GM12878 (cell line): ENCODE measurements at regions of chr5 and their contacts with region 1.

Region 1: GRCh38 chr5:169851321-169851850 is 128.9 kb downstream of the INSYN2B start:
- DNase-seq: no peak
- ATAC-seq: no peak
- H3K4me3 ChIP-seq: no peak overlapping the region
- H3K27ac ChIP-seq: no peak overlapping the region
- H3K4me1 ChIP-seq: no peaks in the 10 kb centered on the region
- H3K27me3 ChIP-seq: no peaks in the 10 kb centered on the region
- CTCF ChIP-seq: no peak
- EP300 ChIP-seq: no peak
- POLR2A ChIP-seq: no peak
- RAD21 ChIP-seq: no peak

Region 2: GRCh38 chr5:169567079-169567478 is 284.3 kb before region 1 on chr5:
- CTCF ChIA-PET with region 1: no interaction called
- POLR2A ChIA-PET with region 1: no interaction called
- RAD21 ChIA-PET with region 1: no interaction called
- SMC1A ChIA-PET with region 1: no interaction called
- in situ Hi-C with region 1: no loop called
- intact Hi-C with region 1: no loop called
- DNase-seq: no peak
- ATAC-seq: peak; percentile 54; the same call in 2 of the 3 replicates
- H3K4me3 ChIP-seq: no peak overlapping the region
- H3K27ac ChIP-seq: no peak overlapping the region
- H3K4me1 ChIP-seq: no peaks in the 10 kb centered on the region
- H3K27me3 ChIP-seq: peaks cover 0 to 2% of the 10 kb centered on the region in 2 experiments; a peak in 3 of 4 replicates
- CTCF ChIP-seq: no peak
- EP300 ChIP-seq: no peak
- POLR2A ChIP-seq: no peak
- RAD21 ChIP-seq: no peak

Region 3: DNA sequence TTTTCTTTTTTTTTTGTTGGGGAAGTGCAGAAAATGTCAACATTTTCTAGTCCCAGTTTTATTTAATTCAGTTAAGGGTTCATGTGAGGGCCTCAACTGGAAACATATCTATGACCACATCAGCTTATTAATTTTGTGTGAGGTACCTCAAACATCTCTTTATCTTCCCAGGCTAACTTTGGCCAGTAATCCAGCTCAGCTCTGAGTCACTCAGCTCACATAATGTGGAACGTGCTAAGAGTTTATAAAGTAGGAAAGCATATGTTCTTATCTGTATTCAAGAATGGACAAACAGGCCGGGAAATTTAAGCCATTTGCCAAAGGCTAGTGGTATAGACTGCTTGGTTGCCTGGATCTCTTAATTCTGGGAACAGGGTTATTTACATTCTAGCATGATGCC is 10.5 kb after region 1 on chr5:
- CTCF ChIA-PET with region 1: interaction called, 4 read pairs
- POLR2A ChIA-PET with region 1: no interaction called
- RAD21 ChIA-PET with region 1: interaction called, 3 read pairs
- SMC1A ChIA-PET with region 1: interaction called, 12 read pairs
- in situ Hi-C with region 1: no loop called
- intact Hi-C with region 1: no loop called
- DNase-seq: no peak
- ATAC-seq: no peak
- H3K4me3 ChIP-seq: no peak overlapping the region
- H3K27ac ChIP-seq: no peak overlapping the region
- H3K4me1 ChIP-seq: 0 out of 2 replicates have a peak, but pooled peaks cover 3% of the 10 kb centered on the region
- H3K27me3 ChIP-seq: no peaks in the 10 kb centered on the region
- CTCF ChIP-seq: no peak
- EP300 ChIP-seq: no peak
- POLR2A ChIP-seq: no peak
- RAD21 ChIP-seq: no peak